Dorsolateral prefrontal cortex (tissue), 120 donors: ENCODE measurements at regions of chr5 and their contacts with region 1.

Region 1: GRCh38 chr5:140302786-140303639 is at the start of gene PFDN1:
- DNase-seq: peak; percentile 89 to 96 (median 94)
- H3K4me3 ChIP-seq: peak within 1 kb of the TSS; percentile 66 to 99 (median 87)
- H3K27ac ChIP-seq: peak within 1 kb of the TSS in 58 of 59 donors; percentile 59 to 96 (median 86)
- H3K27me3 ChIP-seq: no peaks in the 10 kb centered on the region
- CTCF ChIP-seq: peak in 29 of 56 donors; percentile 8 to 52 (median 24)
- total RNA-seq, gene PFDN1: 43.9 to 80.3 (median 64.1) TPM

Region 2: GRCh38 chr5:139619861-139620260 is 683.2 kb before region 1 on chr5:
- intact Hi-C with region 1: no loop called
- DNase-seq: no peak
- H3K4me3 ChIP-seq: no peak overlapping the region
- H3K27ac ChIP-seq: peak overlapping the region in 2 of 59 donors; percentile 7 to 10
- H3K27me3 ChIP-seq: no peaks in the 10 kb centered on the region
- CTCF ChIP-seq: no peak

Region 3: DNA sequence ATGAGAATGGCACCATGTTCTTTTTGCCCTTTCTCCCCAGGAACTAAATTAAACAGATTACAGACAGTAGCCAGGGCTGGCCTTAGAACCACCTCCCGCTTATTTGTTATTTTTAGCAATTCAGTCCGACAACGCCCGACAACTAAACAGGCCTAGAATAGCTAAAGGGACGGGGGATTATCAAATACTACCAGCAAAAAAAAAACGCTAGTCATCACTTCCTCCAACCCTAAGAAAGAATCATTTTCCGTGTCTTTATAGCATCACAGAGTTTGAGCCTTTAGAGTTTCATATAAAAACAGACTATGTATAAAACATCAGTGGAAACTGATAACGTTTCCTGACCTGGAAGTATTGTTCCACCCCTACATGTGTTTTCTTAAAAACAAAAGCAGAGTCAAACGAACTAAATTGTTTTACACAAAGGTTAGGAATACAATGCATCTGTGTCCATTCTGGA is 35.4 kb before region 1 on chr5:
- intact Hi-C with region 1: loop called in 1 of 2 experiments (anchors 5 kb)
- DNase-seq: no peak
- H3K4me3 ChIP-seq: peak overlapping the region in 1 of 59 donors; percentile 3
- H3K27ac ChIP-seq: peak overlapping the region in 11 of 59 donors; percentile 10 to 50 (median 27)
- H3K27me3 ChIP-seq: no peaks in the 10 kb centered on the region
- CTCF ChIP-seq: no peak